IMR-90 (cell line): ENCODE measurements at regions of chr1 and their contacts with region 1.

Region 1: GRCh38 chr1:27556781-27557595 is 47.0 kb downstream of the AHDC1 start:
- DNase-seq: peak; percentile 92
- ATAC-seq: peak; percentile 89
- H3K4me3 ChIP-seq: no peak overlapping the region
- H3K27ac ChIP-seq: peak overlapping the region; percentile 30
- H3K4me1 ChIP-seq: peaks cover 34% of the 10 kb centered on the region
- H3K27me3 ChIP-seq: no peaks in the 10 kb centered on the region
- CTCF ChIP-seq: peak; percentile 88
- POLR2A ChIP-seq: no peak
- RAD21 ChIP-seq: peak; percentile 88

Region 2: GRCh38 chr1:27300341-27301051 is 256.5 kb before region 1 on chr1:
- CTCF ChIA-PET with region 1: interaction called, 4 read pairs
- POLR2A ChIA-PET with region 1: interaction called, 6 read pairs
- dilution Hi-C with region 1: no loop called
- in situ Hi-C with region 1: no loop called
- intact Hi-C with region 1: loop called (anchors 5 kb)
- DNase-seq: peak; percentile 93
- ATAC-seq: peak; percentile 76
- H3K4me3 ChIP-seq: no peak overlapping the region
- H3K27ac ChIP-seq: peak overlapping the region; percentile 95
- H3K4me1 ChIP-seq: peaks cover 27% of the 10 kb centered on the region
- H3K27me3 ChIP-seq: no peaks in the 10 kb centered on the region
- CTCF ChIP-seq: peak; percentile 98
- POLR2A ChIP-seq: peak; percentile 49; the same call in 1 of the 2 replicates
- RAD21 ChIP-seq: peak; percentile 98

Region 3: GRCh38 chr1:27525296-27526272 is 31.4 kb before region 1 on chr1:
- CTCF ChIA-PET with region 1: interaction called, 10 read pairs
- POLR2A ChIA-PET with region 1: no interaction called
- dilution Hi-C with region 1: no loop called
- in situ Hi-C with region 1: no loop called
- intact Hi-C with region 1: no loop called
- DNase-seq: peak; percentile 53
- ATAC-seq: peak; percentile 75
- H3K4me3 ChIP-seq: no peak overlapping the region
- H3K27ac ChIP-seq: peak overlapping the region; percentile 55; the same call in 1 of the 2 replicates
- H3K4me1 ChIP-seq: peaks cover 42% of the 10 kb centered on the region
- H3K27me3 ChIP-seq: no peaks in the 10 kb centered on the region
- CTCF ChIP-seq: no peak
- POLR2A ChIP-seq: no peak
- RAD21 ChIP-seq: no peak

Region 4: GRCh38 chr1:27568300-27569087 is 11.5 kb after region 1 on chr1:
- CTCF ChIA-PET with region 1: interaction called, 13 read pairs
- POLR2A ChIA-PET with region 1: no interaction called
- dilution Hi-C with region 1: no loop called
- in situ Hi-C with region 1: no loop called
- intact Hi-C with region 1: no loop called
- DNase-seq: peak; percentile 81
- ATAC-seq: peak; percentile 88
- H3K4me3 ChIP-seq: no peak overlapping the region
- H3K27ac ChIP-seq: no peak overlapping the region
- H3K4me1 ChIP-seq: peaks cover 62% of the 10 kb centered on the region
- H3K27me3 ChIP-seq: no peaks in the 10 kb centered on the region
- CTCF ChIP-seq: peak; percentile 57
- POLR2A ChIP-seq: no peak
- RAD21 ChIP-seq: no peak

Region 5: DNA sequence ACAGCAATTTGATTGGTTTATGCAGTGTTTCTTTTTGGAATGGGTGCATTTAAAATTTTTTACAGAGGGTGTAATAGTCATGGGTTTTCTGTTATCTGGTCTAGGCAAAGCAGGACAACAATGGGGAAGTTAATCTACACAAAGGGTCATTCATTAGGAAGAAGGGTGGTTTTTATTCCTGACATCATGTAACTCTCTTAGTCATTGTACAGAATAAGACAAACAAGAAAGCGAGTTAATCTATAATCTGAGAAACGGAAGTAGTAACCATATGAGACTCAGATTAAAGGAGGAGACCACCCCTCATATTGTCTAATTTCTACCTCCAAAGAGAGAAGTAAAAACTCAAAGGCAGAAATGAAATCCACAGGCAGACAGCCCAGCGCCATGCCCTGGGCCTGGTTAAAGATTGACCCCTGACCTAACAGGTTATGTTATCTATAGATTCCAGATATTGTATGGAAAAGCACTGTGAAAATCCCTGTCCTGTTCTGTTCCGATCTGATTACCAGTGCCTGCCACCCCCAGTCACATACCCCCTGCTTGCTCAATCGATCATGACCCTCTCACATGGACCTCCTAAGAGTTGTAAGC is 125.5 kb after region 1 on chr1:
- CTCF ChIA-PET with region 1: no interaction called
- POLR2A ChIA-PET with region 1: no interaction called
- dilution Hi-C with region 1: no loop called
- in situ Hi-C with region 1: no loop called
- intact Hi-C with region 1: no loop called
- DNase-seq: no peak
- ATAC-seq: no peak
- H3K4me3 ChIP-seq: no peak overlapping the region
- H3K27ac ChIP-seq: no peak overlapping the region
- H3K4me1 ChIP-seq: no peaks in the 10 kb centered on the region
- H3K27me3 ChIP-seq: peaks cover 27% of the 10 kb centered on the region
- CTCF ChIP-seq: no peak
- POLR2A ChIP-seq: no peak
- RAD21 ChIP-seq: no peak

Region 6: GRCh38 chr1:28369371-28370238 is 812.6 kb after region 1 on chr1 and contains the start of gene PHACTR4:
- CTCF ChIA-PET with region 1: no interaction called
- POLR2A ChIA-PET with region 1: no interaction called
- dilution Hi-C with region 1: no loop called
- in situ Hi-C with region 1: no loop called
- intact Hi-C with region 1: no loop called
- DNase-seq: peak; percentile 91
- ATAC-seq: peak; percentile 95
- H3K4me3 ChIP-seq: peak within 1 kb of the TSS; percentile 66
- H3K27ac ChIP-seq: peak within 1 kb of the TSS; percentile 93
- H3K4me1 ChIP-seq: 0 out of 2 replicates have a peak, but pooled peaks cover 5% of the 10 kb centered on the region
- H3K27me3 ChIP-seq: no peaks in the 10 kb centered on the region
- CTCF ChIP-seq: no peak
- POLR2A ChIP-seq: peak; percentile 76; the same call in 1 of the 2 replicates
- RAD21 ChIP-seq: no peak
- total RNA-seq, gene PHACTR4: 6.9 and 7.5 TPM in 2 replicates